Activated T-helper 1 cell treated with anti-CD3 and anti-CD28 coated beads, Interleukin-12 subunit alpha, Interleukin-12 subunit beta, Interleukin-2, Interleukin-4 antibody, amounts not matched to agents 30 ng/mL and 10 ng/mL and 1 ng/mL, durations not matched to agents 14 hours and 24 hours and 36 hours (primary cell): ENCODE measurements at regions of chr1 and their contacts with region 1.

Region 1: GRCh38 chr1:160098852-160099561 is 588 bp upstream of the IGSF8 start:
- DNase-seq: peak; percentile 93
- H3K4me3 Mint-ChIP-seq: peak overlapping the region; percentile 73
- H3K27ac Mint-ChIP-seq: peak overlapping the region; percentile 73
- H3K4me1 Mint-ChIP-seq: peaks cover 41% of the 10 kb centered on the region
- H3K27me3 Mint-ChIP-seq: peaks cover 5% of the 10 kb centered on the region

Region 2: DNA sequence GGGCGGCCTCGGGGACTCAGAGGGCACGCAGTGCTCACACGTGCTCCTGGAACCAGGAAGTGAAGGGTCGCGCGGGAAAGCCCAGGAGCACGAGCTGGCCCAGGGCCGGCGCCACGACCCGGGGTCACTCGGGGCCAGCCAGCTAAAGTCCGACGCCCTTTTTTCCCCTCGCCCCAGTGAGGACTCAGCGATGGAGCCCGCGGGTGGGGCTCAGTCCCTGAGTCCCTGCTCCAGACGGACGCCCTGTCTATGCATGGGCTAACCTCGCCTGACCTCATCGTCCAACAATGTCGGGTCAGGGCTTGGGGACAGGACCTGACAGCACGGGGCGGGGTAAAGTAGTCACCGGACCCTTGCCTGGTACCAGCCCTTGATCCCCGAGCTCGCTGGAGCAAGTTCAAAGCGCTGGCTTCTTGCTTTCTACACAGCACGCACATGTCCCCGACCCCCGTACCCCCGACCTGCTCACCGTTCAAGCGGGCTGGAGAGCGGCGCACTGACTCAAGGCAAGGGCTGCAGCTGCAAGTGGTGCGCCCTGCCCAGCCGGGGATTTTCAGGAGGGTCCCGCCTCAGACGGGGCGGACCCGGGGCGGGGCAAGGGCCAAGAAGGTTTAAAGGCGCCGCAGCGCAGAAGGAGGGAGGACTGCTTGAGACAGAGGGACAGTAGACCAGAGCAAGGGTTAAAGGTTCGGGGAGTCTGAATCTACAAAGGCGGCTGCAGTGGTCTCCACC is 173.9 kb before region 1 on chr1 and contains the start of gene TAGLN2:
- intact Hi-C with region 1: loop called (anchors 1 kb)
- DNase-seq: peak; percentile 92
- H3K4me3 Mint-ChIP-seq: peak within 1 kb of the TSS; percentile 94
- H3K27ac Mint-ChIP-seq: peak within 1 kb of the TSS; percentile 99
- H3K4me1 Mint-ChIP-seq: peaks cover 57% of the 10 kb centered on the region
- H3K27me3 Mint-ChIP-seq: peaks cover 1% of the 10 kb centered on the region
- total RNA-seq, gene TAGLN2: 442 and 461 TPM in 2 replicates

Region 3: GRCh38 chr1:159945483-159946241 is 153.3 kb before region 1 on chr1 and contains the start of gene IGSF9:
- intact Hi-C with region 1: no loop called
- DNase-seq: no peak
- H3K4me3 Mint-ChIP-seq: peak within 1 kb of the TSS; percentile 11
- H3K27ac Mint-ChIP-seq: no peak within 1 kb of the TSS
- H3K4me1 Mint-ChIP-seq: peaks cover 5% of the 10 kb centered on the region
- H3K27me3 Mint-ChIP-seq: peaks cover 53% of the 10 kb centered on the region
- total RNA-seq, gene IGSF9: not detected in 2 replicates

Region 4: GRCh38 chr1:160108888-160109662 is 10.1 kb after region 1 on chr1:
- intact Hi-C with region 1: loop called (anchors 1 kb)
- DNase-seq: no peak
- H3K4me3 Mint-ChIP-seq: no peak overlapping the region
- H3K27ac Mint-ChIP-seq: no peak overlapping the region
- H3K4me1 Mint-ChIP-seq: peaks cover 7% of the 10 kb centered on the region
- H3K27me3 Mint-ChIP-seq: peaks cover 2% of the 10 kb centered on the region

Region 5: DNA sequence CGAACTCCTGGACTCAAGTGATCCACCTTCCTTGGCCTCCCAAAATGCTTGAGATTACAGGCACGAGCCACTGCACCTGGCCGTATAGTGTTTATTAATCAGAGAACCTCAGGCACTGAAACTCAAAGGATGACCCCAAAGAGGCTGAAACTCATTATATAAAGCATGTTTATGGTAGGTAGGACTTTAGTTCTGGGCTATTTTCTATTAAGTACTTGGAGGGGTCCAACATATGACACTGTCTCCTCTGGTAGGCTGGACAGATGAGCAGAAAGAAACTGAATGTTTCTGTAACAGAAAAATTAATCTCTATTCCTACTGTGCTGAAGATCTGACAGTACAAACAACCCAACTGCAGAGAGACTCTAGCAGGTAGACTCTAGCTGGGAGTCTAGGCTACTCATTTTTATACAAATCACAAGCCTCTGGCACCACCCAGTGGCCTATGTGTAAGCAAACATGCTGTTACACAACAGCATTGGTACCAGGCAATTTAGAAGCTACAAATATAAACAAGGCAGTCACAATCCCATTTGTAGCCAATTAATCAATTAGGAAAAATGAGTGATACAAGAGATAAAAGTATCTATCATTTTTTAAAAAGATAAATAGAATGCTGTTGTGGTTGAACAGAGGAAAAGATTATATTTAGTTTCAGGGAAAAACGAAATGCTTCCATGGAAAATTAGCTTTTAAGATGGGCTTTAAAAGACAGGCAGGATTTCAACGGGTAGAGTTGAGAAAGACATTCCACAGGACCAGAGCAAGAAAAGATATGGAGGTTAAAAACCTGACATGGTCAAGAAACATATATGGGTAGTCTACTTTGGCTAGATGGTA is 152.9 kb after region 1 on chr1:
- intact Hi-C with region 1: loop called (anchors 1 kb)
- DNase-seq: peak; percentile 36
- H3K4me3 Mint-ChIP-seq: no peak overlapping the region
- H3K27ac Mint-ChIP-seq: peak overlapping the region; percentile 68
- H3K4me1 Mint-ChIP-seq: peaks cover 13% of the 10 kb centered on the region
- H3K27me3 Mint-ChIP-seq: no peaks in the 10 kb centered on the region

Region 6: DNA sequence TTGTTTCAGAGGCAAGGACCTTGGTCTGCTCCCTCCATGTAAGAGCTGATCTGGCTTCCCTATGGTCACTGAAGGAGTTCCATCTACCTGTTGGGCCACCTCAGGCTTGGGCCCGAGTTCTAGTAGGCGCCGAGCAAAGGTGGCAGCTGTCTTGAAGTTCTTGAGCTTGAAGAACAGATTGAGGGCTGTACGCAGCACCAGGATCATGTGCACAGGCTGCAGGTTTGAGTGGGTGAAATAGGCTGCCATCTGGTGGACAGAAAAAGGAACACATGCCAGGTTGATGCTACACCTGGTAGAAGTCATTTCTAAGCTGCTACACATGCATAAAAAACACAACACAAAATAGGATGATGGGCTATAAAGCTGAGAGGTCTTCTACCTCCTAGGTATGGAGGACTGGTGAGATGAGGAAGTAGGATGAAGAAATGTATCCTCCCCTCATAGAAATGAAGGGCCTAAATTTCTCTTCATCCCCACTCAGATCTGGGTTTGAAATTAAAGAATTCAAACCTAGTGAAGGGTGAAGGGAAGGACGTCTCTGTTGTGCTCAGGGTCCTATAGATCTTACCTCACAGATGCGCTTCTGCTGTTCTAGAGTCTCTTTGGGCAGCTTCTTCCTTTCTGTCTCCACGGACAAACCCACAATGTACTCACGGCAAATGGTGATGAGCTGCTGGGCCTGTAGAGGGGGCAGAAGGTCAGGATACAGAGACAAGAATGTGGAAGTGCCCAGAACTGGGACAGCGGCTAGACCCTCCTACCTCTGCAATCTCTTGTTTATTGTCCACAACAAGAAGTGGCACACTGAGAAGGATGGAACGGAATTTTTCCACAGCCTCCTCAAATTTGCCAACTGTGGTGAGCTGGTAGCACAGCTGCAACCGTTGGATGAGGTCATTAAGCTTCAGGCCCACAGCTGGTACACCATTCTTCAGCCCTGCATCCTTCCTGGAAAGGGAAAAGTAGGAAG is 192.5 kb after region 1 on chr1:
- intact Hi-C with region 1: loop called (anchors 1 kb)
- DNase-seq: peak; percentile 49
- H3K4me3 Mint-ChIP-seq: no peak overlapping the region
- H3K27ac Mint-ChIP-seq: no peak overlapping the region
- H3K4me1 Mint-ChIP-seq: peaks cover 5% of the 10 kb centered on the region
- H3K27me3 Mint-ChIP-seq: no peaks in the 10 kb centered on the region

Region 7: DNA sequence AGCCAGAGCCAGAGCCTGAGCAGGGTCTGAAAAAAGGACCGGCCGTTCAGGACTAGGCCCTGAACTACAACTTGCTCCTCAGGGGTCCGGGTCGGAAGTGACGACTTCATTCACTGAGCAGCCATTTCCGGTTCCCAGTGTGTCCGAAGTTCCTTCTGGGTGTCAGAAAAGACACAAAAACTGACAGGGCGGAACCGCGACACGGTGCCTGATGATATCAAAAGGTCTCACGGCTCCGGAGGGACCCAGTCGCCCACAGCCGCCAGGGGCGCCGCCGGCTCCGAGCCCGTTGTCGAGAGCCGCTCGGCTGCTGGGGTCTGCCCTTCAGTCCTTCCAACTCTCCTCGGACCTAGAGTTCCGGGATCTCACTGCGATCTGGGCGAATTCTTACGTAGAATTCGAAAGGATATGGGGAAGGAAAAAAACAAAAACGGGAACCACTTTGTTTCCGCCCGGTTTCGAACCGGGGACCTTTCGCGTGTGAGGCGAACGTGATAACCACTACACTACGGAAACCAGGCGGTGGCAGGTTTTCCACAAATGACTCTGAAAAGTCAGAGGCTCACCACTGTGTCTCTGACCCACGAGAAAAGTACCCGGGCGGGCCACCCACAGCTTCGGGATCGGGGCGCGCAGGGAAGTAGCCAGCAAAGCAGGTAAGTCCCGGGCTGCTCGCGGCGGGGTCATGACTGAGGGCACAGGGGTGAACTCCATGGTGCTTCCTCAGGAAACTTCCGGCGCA is 1300.4 kb after region 1 on chr1:
- intact Hi-C with region 1: loop called (anchors 5 kb)
- DNase-seq: peak; percentile 88
- H3K4me3 Mint-ChIP-seq: peak overlapping the region; percentile 94
- H3K27ac Mint-ChIP-seq: peak overlapping the region; percentile 100
- H3K4me1 Mint-ChIP-seq: peaks cover 50% of the 10 kb centered on the region
- H3K27me3 Mint-ChIP-seq: peaks cover 13% of the 10 kb centered on the region